B cell (primary cell): ENCODE measurements at regions of chr13 and their contacts with region 1.

Region 1: GRCh38 chr13:30408319-30409101 is 13.8 kb upstream of the UBE2L5 start:
- DNase-seq: peak; percentile 94
- ATAC-seq: peak; percentile 97
- H3K4me3 ChIP-seq: peak overlapping the region; percentile 14 to 53 (median 48)
- H3K4me3 Mint-ChIP-seq: peak overlapping the region; percentile 73
- H3K27ac ChIP-seq: peak overlapping the region; percentile 56 to 67
- H3K27ac Mint-ChIP-seq: peak overlapping the region; percentile 85
- H3K4me1 ChIP-seq: peaks cover 25 to 40% of the 10 kb centered on the region in 2 donors
- H3K4me1 Mint-ChIP-seq: peaks cover 49% of the 10 kb centered on the region
- H3K27me3 ChIP-seq: no peaks in the 10 kb centered on the region
- H3K27me3 Mint-ChIP-seq: no peaks in the 10 kb centered on the region
- CTCF ChIP-seq: peak; percentile 72

Region 2: GRCh38 chr13:30257468-30258099 is 150.9 kb before region 1 on chr13:
- CTCF ChIA-PET with region 1: no interaction called
- POLR2A ChIA-PET with region 1: no interaction called
- intact Hi-C with region 1: no loop called
- DNase-seq: no peak
- ATAC-seq: no peak
- H3K4me3 ChIP-seq: no peak overlapping the region
- H3K4me3 Mint-ChIP-seq: no peak overlapping the region
- H3K27ac ChIP-seq: no peak overlapping the region
- H3K27ac Mint-ChIP-seq: peak overlapping the region; percentile 21
- H3K4me1 ChIP-seq: peaks cover 5 to 6% of the 10 kb centered on the region in 2 donors
- H3K4me1 Mint-ChIP-seq: peaks cover 13% of the 10 kb centered on the region
- H3K27me3 ChIP-seq: no peaks in the 10 kb centered on the region
- H3K27me3 Mint-ChIP-seq: no peaks in the 10 kb centered on the region
- CTCF ChIP-seq: no peak

Region 3: DNA sequence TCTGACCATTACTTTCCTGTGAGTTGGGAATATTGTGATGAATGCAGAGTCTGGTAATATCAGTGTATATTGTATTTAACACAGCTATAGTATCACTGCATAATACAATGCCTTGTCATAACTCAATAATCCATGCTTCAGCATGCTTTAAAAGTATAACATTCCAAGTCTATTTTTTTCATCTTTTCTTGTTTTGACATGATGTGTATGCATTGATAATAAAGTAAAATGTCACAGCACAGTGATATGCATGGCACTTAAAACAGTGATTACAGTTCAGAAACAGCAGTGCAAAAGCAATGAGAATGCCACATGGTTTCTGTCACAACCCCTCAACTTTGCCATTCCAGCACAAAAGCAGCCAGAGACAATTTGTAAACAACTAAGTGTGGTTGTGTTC is 119.0 kb before region 1 on chr13:
- CTCF ChIA-PET with region 1: no interaction called
- POLR2A ChIA-PET with region 1: no interaction called
- intact Hi-C with region 1: no loop called
- DNase-seq: no peak
- ATAC-seq: no peak
- H3K4me3 ChIP-seq: no peak overlapping the region
- H3K4me3 Mint-ChIP-seq: no peak overlapping the region
- H3K27ac ChIP-seq: no peak overlapping the region
- H3K27ac Mint-ChIP-seq: no peak overlapping the region
- H3K4me1 ChIP-seq: peaks cover 3 to 5% of the 10 kb centered on the region in 2 donors
- H3K4me1 Mint-ChIP-seq: peaks cover 30% of the 10 kb centered on the region
- H3K27me3 ChIP-seq: no peaks in the 10 kb centered on the region
- H3K27me3 Mint-ChIP-seq: no peaks in the 10 kb centered on the region
- CTCF ChIP-seq: no peak

Region 4: DNA sequence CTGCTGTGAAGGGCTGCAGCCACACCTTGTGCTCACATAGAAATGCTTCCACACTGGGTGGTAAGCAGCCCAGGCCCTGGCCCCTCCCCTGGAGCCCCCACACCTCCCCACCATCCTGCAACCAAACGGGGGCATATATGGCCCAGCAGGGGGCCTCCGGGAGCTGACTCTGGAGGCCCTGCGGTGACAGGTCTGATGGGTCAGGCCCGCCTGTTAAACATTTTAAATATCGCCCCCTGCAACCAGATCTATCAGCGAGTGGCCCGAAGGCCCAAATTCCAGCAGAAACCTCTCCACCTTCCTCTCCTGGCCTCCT is 53.2 kb before region 1 on chr13:
- CTCF ChIA-PET with region 1: interaction called, 25 read pairs
- POLR2A ChIA-PET with region 1: no interaction called
- intact Hi-C with region 1: loop called (anchors 1 kb)
- DNase-seq: peak; percentile 83
- ATAC-seq: peak; percentile 96
- H3K4me3 ChIP-seq: peak overlapping the region in 1 of 5 experiments; percentile 12
- H3K4me3 Mint-ChIP-seq: peak overlapping the region; percentile 72
- H3K27ac ChIP-seq: no peak overlapping the region
- H3K27ac Mint-ChIP-seq: peak overlapping the region; percentile 60
- H3K4me1 ChIP-seq: peaks cover 21 to 32% of the 10 kb centered on the region in 2 donors
- H3K4me1 Mint-ChIP-seq: peaks cover 30% of the 10 kb centered on the region
- H3K27me3 ChIP-seq: no peaks in the 10 kb centered on the region
- H3K27me3 Mint-ChIP-seq: no peaks in the 10 kb centered on the region
- CTCF ChIP-seq: peak; percentile 79

Region 5: GRCh38 chr13:30371649-30372265 is 36.8 kb before region 1 on chr13:
- CTCF ChIA-PET with region 1: interaction called, 93 read pairs
- POLR2A ChIA-PET with region 1: interaction called, 8 read pairs
- intact Hi-C with region 1: loop called (anchors 1 kb)
- DNase-seq: peak; percentile 98
- ATAC-seq: peak; percentile 83
- H3K4me3 ChIP-seq: peak overlapping the region; percentile 13 to 47 (median 45)
- H3K4me3 Mint-ChIP-seq: peak overlapping the region; percentile 91
- H3K27ac ChIP-seq: peak overlapping the region; percentile 76 to 78
- H3K27ac Mint-ChIP-seq: peak overlapping the region; percentile 94
- H3K4me1 ChIP-seq: peaks cover 75 to 81% of the 10 kb centered on the region in 2 donors
- H3K4me1 Mint-ChIP-seq: peaks cover 84% of the 10 kb centered on the region
- H3K27me3 ChIP-seq: no peaks in the 10 kb centered on the region
- H3K27me3 Mint-ChIP-seq: no peaks in the 10 kb centered on the region
- CTCF ChIP-seq: no peak

Region 6: DNA sequence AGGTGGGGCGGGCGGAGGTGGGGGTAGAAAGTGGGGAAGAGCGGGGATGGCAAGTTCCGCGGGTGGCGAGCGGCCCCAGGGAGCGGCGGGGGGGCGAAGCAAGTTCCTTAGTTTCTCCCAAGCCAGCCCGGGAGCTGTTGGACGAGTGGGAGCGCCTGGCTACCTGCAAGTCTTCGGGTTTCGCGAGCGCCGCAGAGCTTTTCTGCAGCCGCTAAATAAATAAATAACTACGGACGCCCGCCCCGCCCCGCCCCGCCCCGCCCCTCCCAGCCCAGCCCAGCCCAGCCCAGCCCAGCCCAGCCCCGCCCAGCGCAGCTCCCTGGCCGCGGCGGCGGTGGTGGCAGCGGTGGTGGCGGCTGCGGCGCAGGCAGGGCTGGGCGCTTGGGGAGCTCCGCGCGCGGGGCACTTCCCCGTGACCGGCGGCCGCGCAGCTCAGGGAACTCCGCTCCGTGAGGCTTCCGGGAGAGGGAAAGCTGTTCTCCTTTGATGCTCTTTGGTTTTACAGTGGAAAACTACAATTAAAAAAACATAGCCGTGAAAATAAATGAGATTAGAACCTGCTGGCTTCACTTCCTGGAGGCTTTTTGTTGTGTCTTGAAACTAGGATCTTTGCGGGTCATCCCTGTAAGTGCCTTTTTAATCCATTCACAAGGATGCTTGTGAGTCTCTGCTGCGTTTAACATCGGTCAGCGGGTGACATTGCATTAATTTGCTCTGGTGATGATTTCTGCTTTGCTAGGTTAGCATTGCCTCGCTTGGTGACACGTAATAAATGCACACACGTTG is 13.7 kb after region 1 on chr13 and contains the start of gene UBE2L5:
- CTCF ChIA-PET with region 1: interaction called, 38 read pairs
- POLR2A ChIA-PET with region 1: interaction called, 19 read pairs
- intact Hi-C with region 1: loop called (anchors 1 kb)
- DNase-seq: peak; percentile 85
- ATAC-seq: peak; percentile 93
- H3K4me3 ChIP-seq: peak within 1 kb of the TSS; percentile 57 to 83 (median 77)
- H3K4me3 Mint-ChIP-seq: peak within 1 kb of the TSS; percentile 92
- H3K27ac ChIP-seq: peak within 1 kb of the TSS; percentile 45 to 71
- H3K27ac Mint-ChIP-seq: peak within 1 kb of the TSS; percentile 90
- H3K4me1 ChIP-seq: peaks cover 18 to 42% of the 10 kb centered on the region in 2 donors
- H3K4me1 Mint-ChIP-seq: peaks cover 47% of the 10 kb centered on the region
- H3K27me3 ChIP-seq: no peaks in the 10 kb centered on the region
- H3K27me3 Mint-ChIP-seq: no peaks in the 10 kb centered on the region
- CTCF ChIP-seq: no peak
- total RNA-seq, gene UBE2L5: 0.57 and 0.58 TPM in 2 replicates

Region 7: GRCh38 chr13:30443957-30444404 is 35.5 kb after region 1 on chr13:
- CTCF ChIA-PET with region 1: interaction called, 47 read pairs
- POLR2A ChIA-PET with region 1: interaction called, 9 read pairs
- intact Hi-C with region 1: loop called (anchors 1 kb)
- DNase-seq: peak; percentile 83
- ATAC-seq: peak; percentile 87
- H3K4me3 ChIP-seq: peak overlapping the region in 4 of 5 experiments; percentile 4 to 44 (median 30)
- H3K4me3 Mint-ChIP-seq: peak overlapping the region; percentile 89
- H3K27ac ChIP-seq: peak overlapping the region; percentile 82 to 88
- H3K27ac Mint-ChIP-seq: peak overlapping the region; percentile 89
- H3K4me1 ChIP-seq: peaks cover 61 to 65% of the 10 kb centered on the region in 2 donors
- H3K4me1 Mint-ChIP-seq: peaks cover 64% of the 10 kb centered on the region
- H3K27me3 ChIP-seq: no peaks in the 10 kb centered on the region
- H3K27me3 Mint-ChIP-seq: no peaks in the 10 kb centered on the region
- CTCF ChIP-seq: no peak

Region 8: DNA sequence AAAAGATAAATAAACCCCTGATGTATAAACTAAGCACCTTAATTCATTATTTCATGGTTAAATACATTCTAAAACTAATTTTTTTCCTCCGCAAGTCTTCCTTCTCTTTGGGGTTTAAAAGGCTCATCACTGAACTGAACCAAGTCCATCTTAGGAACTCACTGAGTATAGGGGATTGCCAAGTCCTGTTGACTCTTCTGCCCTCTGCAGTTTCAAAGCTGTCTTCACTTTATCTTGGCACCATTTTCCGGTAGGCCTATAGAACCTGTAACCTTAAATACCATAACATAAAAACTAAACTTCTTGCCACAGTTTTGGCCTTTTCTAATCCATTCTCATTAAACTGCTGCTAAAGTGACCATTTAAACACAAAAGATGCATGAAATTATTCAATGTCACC is 142.7 kb after region 1 on chr13:
- CTCF ChIA-PET with region 1: no interaction called
- POLR2A ChIA-PET with region 1: no interaction called
- intact Hi-C with region 1: loop called (anchors 1 kb)
- DNase-seq: peak; percentile 64
- ATAC-seq: peak; percentile 84
- H3K4me3 ChIP-seq: no peak overlapping the region
- H3K4me3 Mint-ChIP-seq: no peak overlapping the region
- H3K27ac ChIP-seq: no peak overlapping the region
- H3K27ac Mint-ChIP-seq: no peak overlapping the region
- H3K4me1 ChIP-seq: peaks cover 8% of the 10 kb centered on the region in 2 donors
- H3K4me1 Mint-ChIP-seq: peaks cover 7% of the 10 kb centered on the region
- H3K27me3 ChIP-seq: no peaks in the 10 kb centered on the region
- H3K27me3 Mint-ChIP-seq: no peaks in the 10 kb centered on the region
- CTCF ChIP-seq: peak; percentile 61

Region 9: DNA sequence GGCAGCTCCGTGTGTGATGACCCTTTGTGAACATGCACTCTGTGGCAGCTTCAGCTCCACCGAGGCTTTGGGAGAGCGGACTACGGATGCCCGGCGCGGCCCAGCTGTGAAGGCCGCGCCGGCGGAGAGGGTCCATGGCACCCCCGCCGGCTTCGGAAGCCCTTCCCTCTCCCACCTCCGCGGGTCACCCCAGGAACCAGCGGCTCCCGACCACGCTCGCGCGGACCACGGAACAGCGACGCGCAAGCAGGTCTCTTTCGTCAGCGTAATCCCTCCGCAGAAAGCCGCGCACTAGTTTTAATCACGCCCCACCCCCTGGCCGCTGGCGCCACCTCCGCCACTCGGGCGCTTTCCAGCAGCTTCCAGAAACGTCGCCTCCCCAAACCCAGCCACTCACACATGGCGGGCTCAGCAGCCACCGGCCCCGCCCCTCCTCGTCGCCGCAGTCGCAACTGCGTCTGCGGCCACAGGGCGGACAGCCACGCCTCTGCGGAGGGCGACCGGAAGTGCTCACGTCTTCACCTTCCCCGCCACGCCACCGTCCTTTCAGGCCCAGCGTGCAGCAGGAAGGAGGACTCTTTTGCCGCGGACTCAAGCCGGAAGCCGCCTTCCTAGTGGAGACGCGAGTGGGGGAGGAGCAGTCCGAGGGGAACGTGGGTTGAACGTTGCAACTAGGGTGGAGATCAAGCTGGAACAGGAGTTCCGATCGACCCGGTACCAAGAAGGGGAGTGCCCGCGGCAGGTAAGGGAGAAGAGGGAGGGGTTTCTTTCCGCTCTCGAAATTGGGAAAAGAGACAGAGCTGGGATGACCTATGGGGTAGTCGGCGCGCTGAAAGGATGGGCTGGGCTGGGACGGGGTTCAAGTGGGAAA is 209.0 kb after region 1 on chr13 and contains the start of gene USPL1:
- CTCF ChIA-PET with region 1: interaction called, 3 read pairs
- POLR2A ChIA-PET with region 1: interaction called, 3 read pairs
- intact Hi-C with region 1: loop called (anchors 1 kb)
- DNase-seq: peak; percentile 100
- ATAC-seq: peak; percentile 82
- H3K4me3 ChIP-seq: peak within 1 kb of the TSS; percentile 90 to 98 (median 93)
- H3K4me3 Mint-ChIP-seq: no peak within 1 kb of the TSS
- H3K27ac ChIP-seq: peak within 1 kb of the TSS; percentile 98 to 100
- H3K27ac Mint-ChIP-seq: no peak within 1 kb of the TSS
- H3K4me1 ChIP-seq: peaks cover 36 to 38% of the 10 kb centered on the region in 2 donors
- H3K4me1 Mint-ChIP-seq: peaks cover 35% of the 10 kb centered on the region
- H3K27me3 ChIP-seq: no peaks in the 10 kb centered on the region
- H3K27me3 Mint-ChIP-seq: no peaks in the 10 kb centered on the region
- CTCF ChIP-seq: no peak
- total RNA-seq, gene USPL1: 52.2 and 55.8 TPM in 2 replicates